ENCODE measurements at regions of chr1 and their contacts with region 1.

Region 1: GRCh38 chr1:174367892-174368291 is 79.9 kb upstream of the GPR52 start:
- DNase-seq: no peak
- ATAC-seq: no peak
- H3K4me3 ChIP-seq: no peak overlapping the region
- H3K27ac ChIP-seq: no peak overlapping the region
- H3K4me1 ChIP-seq: no peaks in the 10 kb centered on the region
- H3K27me3 ChIP-seq: no peaks in the 10 kb centered on the region
- CTCF ChIP-seq: no peak

Region 2: GRCh38 chr1:174209347-174210187 is 158.3 kb before region 1 on chr1:
- CTCF ChIA-PET with region 1: no interaction called
- POLR2A ChIA-PET with region 1: no interaction called
- intact Hi-C with region 1: no loop called
- DNase-seq: no peak
- ATAC-seq: no peak
- H3K4me3 ChIP-seq: no peak overlapping the region
- H3K27ac ChIP-seq: no peak overlapping the region
- H3K4me1 ChIP-seq: no peaks in the 10 kb centered on the region
- H3K27me3 ChIP-seq: no peaks in the 10 kb centered on the region
- CTCF ChIP-seq: no peak

Region 3: DNA sequence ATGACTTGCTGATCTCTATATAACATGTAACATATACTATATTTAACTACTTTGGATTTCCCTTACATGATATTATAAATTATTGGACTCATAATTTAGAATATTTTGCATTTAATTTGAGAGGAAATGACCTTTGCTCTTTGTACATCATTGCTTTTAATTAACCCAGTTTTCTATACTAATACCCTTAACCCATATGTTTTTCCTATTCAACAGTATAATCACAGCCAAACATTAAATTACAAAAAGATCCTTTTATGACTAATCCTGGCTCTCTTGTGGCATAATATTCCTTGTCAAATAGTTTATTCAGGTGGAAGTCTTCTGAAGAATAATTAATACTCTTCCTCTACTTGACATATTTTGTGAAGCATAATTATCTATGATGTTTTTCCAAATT is 23.8 kb after region 1 on chr1:
- CTCF ChIA-PET with region 1: no interaction called
- POLR2A ChIA-PET with region 1: no interaction called
- intact Hi-C with region 1: loop called (anchors 1 kb)
- DNase-seq: no peak
- ATAC-seq: no peak
- H3K4me3 ChIP-seq: no peak overlapping the region
- H3K27ac ChIP-seq: no peak overlapping the region
- H3K4me1 ChIP-seq: no peaks in the 10 kb centered on the region
- H3K27me3 ChIP-seq: no peaks in the 10 kb centered on the region
- CTCF ChIP-seq: no peak

Measured in PC-3 (cell line).